ENCODE measurements at regions of chr6 and their contacts with region 1.

Region 1: DNA sequence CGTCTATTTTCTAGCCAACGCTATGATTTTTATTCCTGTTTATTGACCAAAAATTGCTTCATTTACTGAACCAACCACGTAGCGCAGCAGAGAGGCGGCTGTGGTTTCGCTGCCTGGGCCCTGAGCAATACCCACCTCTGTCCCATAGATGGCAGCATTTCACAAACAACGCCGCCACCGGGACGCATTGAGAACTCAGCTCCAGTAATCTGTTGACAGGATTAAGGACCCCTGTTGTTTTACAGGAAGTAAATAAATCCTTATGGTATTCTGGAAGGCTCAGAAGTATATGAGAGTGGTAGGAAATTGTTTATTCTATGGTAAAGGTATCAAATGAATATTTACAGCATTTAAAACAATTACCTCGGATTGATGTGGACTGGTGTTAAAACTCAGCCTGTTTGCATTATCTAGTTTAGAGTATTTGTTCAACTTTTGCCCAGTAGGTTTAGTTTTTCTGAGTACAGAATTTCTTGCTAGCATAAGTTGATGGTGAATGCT is 547.9 kb upstream of the SLC35B3 start:
- DNase-seq: peak; percentile 34 to 58
- ATAC-seq: peak; percentile 70 to 81 (median 72)
- H3K4me3 ChIP-seq: no peak overlapping the region
- H3K27ac ChIP-seq: no peak overlapping the region
- H3K4me1 ChIP-seq: no peaks in the 10 kb centered on the region
- H3K27me3 ChIP-seq: peaks cover 0 to 2% (median 0%) of the 10 kb centered on the region in 3 donors
- CTCF ChIP-seq: peak; percentile 89

Region 2: GRCh38 chr6:9116026-9116425 is 132.8 kb after region 1 on chr6:
- intact Hi-C with region 1: no loop called
- DNase-seq: no peak
- ATAC-seq: no peak
- H3K4me3 ChIP-seq: no peak overlapping the region
- H3K27ac ChIP-seq: no peak overlapping the region
- H3K4me1 ChIP-seq: no peaks in the 10 kb centered on the region
- H3K27me3 ChIP-seq: no peaks in the 10 kb centered on the region
- CTCF ChIP-seq: no peak

Region 3: DNA sequence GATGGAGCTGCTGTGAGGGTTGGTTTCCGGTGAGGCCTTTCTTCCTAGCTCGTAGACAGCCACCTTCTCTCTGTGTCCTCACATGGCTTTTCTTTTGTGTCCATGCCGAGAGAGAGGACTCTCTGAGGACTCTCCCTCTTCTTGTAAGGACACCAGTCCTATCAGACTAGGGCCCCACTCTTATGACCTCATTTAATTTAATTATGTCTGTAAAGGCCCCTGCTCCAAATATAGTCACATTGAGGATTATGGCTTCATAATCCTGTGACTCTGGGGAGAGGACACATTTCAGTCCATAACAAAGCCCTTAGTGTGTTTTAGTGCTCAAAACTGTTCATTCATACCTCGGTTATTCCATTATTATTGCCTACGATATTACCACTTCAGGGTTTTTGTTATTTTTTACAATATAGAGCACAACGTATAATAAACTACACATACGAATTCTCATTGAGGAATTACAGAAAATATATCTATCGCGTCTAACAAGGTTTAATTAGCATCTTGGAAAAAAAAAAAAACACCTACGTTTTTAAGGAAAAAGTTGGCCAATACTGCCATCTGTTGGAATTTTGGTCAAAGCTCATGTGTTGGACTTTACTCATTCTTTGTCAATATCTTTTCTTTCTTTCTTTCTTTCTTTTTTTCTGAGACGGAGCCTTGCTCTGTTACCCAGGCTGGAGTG is 1451.6 kb after region 1 on chr6:
- intact Hi-C with region 1: loop called (anchors 5 kb)
- DNase-seq: no peak
- ATAC-seq: no peak
- H3K4me3 ChIP-seq: no peak overlapping the region
- H3K27ac ChIP-seq: no peak overlapping the region
- H3K4me1 ChIP-seq: no peaks in the 10 kb centered on the region
- H3K27me3 ChIP-seq: peaks cover 0 to 2% (median 2%) of the 10 kb centered on the region in 3 donors
- CTCF ChIP-seq: peak; percentile 61